WTC11 (cell line): ENCODE measurements at regions of chr18 and their contacts with region 1.

Region 1: DNA sequence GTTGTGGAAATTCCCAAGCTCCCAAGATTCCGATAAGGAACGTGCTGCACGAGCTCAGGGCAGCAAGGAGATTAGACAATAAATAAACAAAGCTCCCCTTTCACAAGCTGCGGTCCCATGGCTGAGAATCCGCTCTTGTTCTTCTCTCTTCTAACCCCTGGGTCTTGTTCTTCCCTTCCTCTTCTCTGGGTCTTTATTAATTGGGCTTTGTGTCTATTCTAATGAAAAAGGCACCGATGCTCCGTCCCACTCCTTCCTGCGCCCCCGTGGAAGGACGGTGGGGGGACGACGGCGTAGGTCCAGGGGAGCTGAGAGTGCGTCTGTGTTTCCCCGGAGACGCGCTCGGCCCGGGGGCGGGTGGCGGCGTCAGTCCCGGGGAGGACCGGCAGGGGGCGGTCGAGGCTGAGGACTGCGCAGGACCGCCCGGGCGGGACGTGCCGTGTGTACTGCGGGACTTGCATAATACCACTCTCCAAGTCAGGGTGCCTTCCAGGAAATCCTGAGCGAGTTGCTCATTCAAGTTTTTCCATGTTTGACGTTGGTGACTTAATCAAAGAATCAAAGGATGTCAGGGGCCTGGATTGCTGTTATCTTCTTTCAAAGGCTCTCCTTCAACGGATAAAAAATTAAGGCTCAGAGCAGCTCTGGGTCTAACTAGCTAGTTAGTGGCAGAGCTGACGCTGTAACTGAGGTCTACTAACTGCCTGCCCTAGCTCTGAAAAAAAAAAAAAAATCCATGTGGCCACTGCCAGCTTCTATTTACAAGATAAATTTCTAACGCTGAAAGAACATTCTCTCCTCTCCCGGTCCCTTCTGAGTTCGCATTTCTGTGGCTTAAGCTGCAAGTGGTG is 321.4 kb downstream of the TGIF1 start:
- DNase-seq: peak; percentile 90
- ATAC-seq: peak; percentile 93
- H3K4me3 Mint-ChIP-seq: peak overlapping the region; percentile 87
- H3K27ac Mint-ChIP-seq: no peak overlapping the region; the same call in 1 of the 2 replicates
- H3K4me1 Mint-ChIP-seq: peaks cover 48% of the 10 kb centered on the region
- H3K27me3 Mint-ChIP-seq: no peaks in the 10 kb centered on the region; the same call in 1 of the 2 replicates
- CTCF ChIP-seq: peak; percentile 96

Region 2: DNA sequence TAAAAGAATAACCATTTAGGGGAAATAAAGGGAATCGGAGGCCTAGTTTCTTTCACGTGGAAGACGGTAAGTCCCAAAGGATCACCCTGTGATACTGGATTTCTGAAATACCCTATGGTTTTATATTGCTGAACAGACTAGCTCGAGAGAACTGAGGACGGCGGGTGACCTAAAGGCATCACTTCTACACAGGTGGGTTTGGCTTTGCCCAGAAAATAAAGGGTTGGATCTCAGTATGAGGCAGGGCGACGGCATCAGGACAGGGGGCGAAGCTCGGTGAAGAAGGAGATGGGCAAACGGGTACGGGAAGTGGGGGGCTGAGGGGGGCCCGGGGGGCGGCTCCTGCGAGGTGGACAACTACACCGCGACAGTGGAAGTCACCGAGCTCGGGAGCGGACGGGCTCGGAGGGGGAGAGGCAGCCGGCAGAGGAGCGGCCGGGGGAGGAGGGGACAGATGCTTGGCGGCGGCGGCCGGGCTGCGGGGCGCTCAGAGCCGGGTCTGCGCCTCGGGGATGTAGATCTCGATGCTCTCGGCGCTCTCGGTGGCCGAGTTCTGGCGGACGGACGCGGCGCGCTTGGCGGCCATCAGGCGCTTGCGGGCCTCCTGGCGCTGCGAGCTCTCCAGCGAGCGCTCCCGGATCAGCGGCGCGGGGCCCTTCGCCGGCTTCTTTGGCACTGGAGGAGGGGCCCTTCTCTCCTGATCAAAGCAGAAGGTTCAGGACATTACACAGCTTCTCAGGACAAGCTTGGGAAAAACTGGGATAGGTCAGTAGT is 272.5 kb before region 1 on chr18:
- CTCF ChIA-PET with region 1: interaction called, 11 read pairs
- POLR2A ChIA-PET with region 1: no interaction called
- DNase-seq: peak; percentile 78
- ATAC-seq: peak; percentile 82
- H3K4me3 Mint-ChIP-seq: peak overlapping the region; percentile 79
- H3K27ac Mint-ChIP-seq: peak overlapping the region; percentile 38; the same call in 1 of the 2 replicates
- H3K4me1 Mint-ChIP-seq: peaks cover 37% of the 10 kb centered on the region
- H3K27me3 Mint-ChIP-seq: peaks cover 10% of the 10 kb centered on the region
- CTCF ChIP-seq: no peak

Region 3: GRCh38 chr18:3703732-3704176 is 67.6 kb before region 1 on chr18:
- CTCF ChIA-PET with region 1: interaction called, 47 read pairs
- POLR2A ChIA-PET with region 1: no interaction called
- DNase-seq: peak; percentile 65
- ATAC-seq: peak; percentile 83
- H3K4me3 Mint-ChIP-seq: no peak overlapping the region
- H3K27ac Mint-ChIP-seq: peak overlapping the region; percentile 39; the same call in 1 of the 2 replicates
- H3K4me1 Mint-ChIP-seq: peaks cover 8% of the 10 kb centered on the region
- H3K27me3 Mint-ChIP-seq: no peaks in the 10 kb centered on the region; the same call in 1 of the 2 replicates
- CTCF ChIP-seq: peak; percentile 50

Region 4: GRCh38 chr18:3782901-3783300 is 11.6 kb after region 1 on chr18:
- CTCF ChIA-PET with region 1: interaction called, 31 read pairs
- POLR2A ChIA-PET with region 1: no interaction called
- DNase-seq: no peak
- ATAC-seq: no peak
- H3K4me3 Mint-ChIP-seq: no peak overlapping the region
- H3K27ac Mint-ChIP-seq: no peak overlapping the region
- H3K4me1 Mint-ChIP-seq: peaks cover 8% of the 10 kb centered on the region
- H3K27me3 Mint-ChIP-seq: no peaks in the 10 kb centered on the region
- CTCF ChIP-seq: no peak

Region 5: DNA sequence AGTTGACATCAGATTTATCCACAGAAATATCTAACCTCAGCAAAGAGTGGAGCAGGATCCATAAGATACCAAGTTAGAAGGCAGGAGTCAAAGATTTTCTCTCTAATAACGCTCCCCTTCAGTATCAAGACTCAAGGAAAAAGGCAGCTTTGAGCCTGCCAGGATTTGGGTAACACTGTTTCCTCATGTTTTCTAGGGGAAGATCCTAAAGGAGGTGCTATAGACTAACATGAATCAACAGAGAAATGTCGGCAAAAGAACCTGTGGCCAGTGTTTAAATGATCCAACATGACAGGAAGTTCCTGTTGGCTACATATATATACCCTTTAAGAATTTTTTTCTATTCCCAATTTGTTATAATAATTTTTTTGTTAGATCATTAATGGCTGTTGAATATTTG is 81.0 kb after region 1 on chr18:
- CTCF ChIA-PET with region 1: interaction called, 17 read pairs
- POLR2A ChIA-PET with region 1: no interaction called
- DNase-seq: no peak
- ATAC-seq: peak; percentile 53
- H3K4me3 Mint-ChIP-seq: no peak overlapping the region
- H3K27ac Mint-ChIP-seq: no peak overlapping the region
- H3K4me1 Mint-ChIP-seq: no peaks in the 10 kb centered on the region
- H3K27me3 Mint-ChIP-seq: no peaks in the 10 kb centered on the region
- CTCF ChIP-seq: no peak

Region 6: DNA sequence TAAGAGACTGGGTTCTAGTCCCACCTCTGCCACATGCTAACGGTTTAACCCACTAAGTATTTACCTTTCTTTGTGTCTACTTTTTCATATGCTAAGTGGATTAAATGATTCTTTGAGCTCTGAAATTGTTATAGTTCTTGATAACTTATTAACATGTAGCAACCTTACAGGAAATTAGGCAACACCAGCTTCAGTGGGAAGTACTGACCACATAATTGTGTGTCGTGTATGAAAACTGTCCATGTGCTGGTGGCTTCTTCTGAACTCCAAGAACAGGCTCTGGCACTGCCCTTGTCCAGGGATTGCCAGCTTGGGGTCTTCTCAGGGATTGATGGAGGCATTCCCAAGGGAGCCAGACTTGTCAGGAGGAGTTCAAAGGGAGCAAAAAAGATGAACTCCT is 106.3 kb after region 1 on chr18:
- CTCF ChIA-PET with region 1: interaction called, 18 read pairs
- POLR2A ChIA-PET with region 1: no interaction called
- DNase-seq: no peak
- ATAC-seq: no peak
- H3K4me3 Mint-ChIP-seq: no peak overlapping the region
- H3K27ac Mint-ChIP-seq: no peak overlapping the region
- H3K4me1 Mint-ChIP-seq: peaks cover 25% of the 10 kb centered on the region
- H3K27me3 Mint-ChIP-seq: no peaks in the 10 kb centered on the region
- CTCF ChIP-seq: no peak

Region 7: GRCh38 chr18:4181882-4182568 is 410.7 kb after region 1 on chr18:
- CTCF ChIA-PET with region 1: interaction called, 10 read pairs
- POLR2A ChIA-PET with region 1: no interaction called
- DNase-seq: peak; percentile 19
- ATAC-seq: peak; percentile 95
- H3K4me3 Mint-ChIP-seq: no peak overlapping the region
- H3K27ac Mint-ChIP-seq: peak overlapping the region; percentile 83
- H3K4me1 Mint-ChIP-seq: peaks cover 48% of the 10 kb centered on the region
- H3K27me3 Mint-ChIP-seq: no peaks in the 10 kb centered on the region
- CTCF ChIP-seq: no peak